Calu3 (cell line): ENCODE measurements at regions of chr17 and their contacts with region 1.

Region 1: GRCh38 chr17:72618001-72618509 is 474.4 kb downstream of the SLC39A11 start:
- DNase-seq: peak; percentile 94
- H3K4me3 Mint-ChIP-seq: peak overlapping the region; percentile 61
- H3K27ac Mint-ChIP-seq: peak overlapping the region; percentile 98
- H3K4me1 Mint-ChIP-seq: peaks cover 72% of the 10 kb centered on the region
- H3K27me3 Mint-ChIP-seq: no peaks in the 10 kb centered on the region
- CTCF ChIP-seq: no peak

Region 2: DNA sequence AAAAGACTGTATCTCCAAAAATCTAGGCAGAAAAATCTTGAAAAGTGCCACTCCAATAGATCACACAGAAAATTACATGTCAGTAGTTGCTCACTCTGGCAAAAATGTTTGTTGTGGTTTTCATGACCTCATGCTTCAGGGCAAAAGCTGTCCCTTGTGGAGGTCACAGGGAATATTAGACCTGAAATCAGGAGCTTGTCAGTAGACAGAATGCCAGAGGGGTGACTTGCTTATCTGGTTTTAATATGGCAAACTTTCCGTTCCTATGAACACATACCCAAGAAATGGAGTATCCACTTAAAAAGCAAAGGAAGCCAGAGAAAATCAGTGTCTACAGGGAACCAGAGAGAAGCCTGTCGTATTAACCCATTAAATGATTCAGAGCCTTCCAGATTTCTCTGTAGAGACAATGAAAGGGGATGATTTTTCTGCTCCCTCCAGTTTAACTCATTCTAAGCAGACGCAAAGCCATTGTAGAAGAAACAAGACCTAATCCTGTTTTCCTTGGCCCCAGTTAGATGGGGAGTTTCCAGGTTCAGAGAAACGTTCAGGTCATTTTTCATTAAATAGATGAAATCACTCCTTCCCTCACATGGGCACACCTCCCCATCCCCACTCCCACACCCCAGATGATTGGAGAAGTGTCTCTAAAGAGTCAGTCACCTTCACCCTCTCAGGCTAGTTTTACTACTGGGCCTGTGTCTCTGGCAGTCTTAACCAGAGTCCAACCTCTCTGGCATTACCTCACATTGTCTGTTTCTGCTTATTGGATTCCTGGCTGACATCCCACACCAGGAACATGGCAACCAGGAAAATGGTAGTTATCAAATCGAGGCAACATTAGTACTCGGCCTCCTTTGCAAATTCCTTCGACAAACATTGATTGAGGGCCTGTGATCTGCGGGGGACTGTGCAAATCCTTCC is 491.2 kb before region 1 on chr17:
- CTCF ChIA-PET with region 1: interaction called, 7 read pairs
- intact Hi-C with region 1: loop called (anchors 1 kb)
- DNase-seq: peak; percentile 61
- H3K4me3 Mint-ChIP-seq: peak overlapping the region; percentile 90
- H3K27ac Mint-ChIP-seq: peak overlapping the region; percentile 64
- H3K4me1 Mint-ChIP-seq: peaks cover 35% of the 10 kb centered on the region
- H3K27me3 Mint-ChIP-seq: peaks cover 28% of the 10 kb centered on the region
- CTCF ChIP-seq: no peak

Region 3: DNA sequence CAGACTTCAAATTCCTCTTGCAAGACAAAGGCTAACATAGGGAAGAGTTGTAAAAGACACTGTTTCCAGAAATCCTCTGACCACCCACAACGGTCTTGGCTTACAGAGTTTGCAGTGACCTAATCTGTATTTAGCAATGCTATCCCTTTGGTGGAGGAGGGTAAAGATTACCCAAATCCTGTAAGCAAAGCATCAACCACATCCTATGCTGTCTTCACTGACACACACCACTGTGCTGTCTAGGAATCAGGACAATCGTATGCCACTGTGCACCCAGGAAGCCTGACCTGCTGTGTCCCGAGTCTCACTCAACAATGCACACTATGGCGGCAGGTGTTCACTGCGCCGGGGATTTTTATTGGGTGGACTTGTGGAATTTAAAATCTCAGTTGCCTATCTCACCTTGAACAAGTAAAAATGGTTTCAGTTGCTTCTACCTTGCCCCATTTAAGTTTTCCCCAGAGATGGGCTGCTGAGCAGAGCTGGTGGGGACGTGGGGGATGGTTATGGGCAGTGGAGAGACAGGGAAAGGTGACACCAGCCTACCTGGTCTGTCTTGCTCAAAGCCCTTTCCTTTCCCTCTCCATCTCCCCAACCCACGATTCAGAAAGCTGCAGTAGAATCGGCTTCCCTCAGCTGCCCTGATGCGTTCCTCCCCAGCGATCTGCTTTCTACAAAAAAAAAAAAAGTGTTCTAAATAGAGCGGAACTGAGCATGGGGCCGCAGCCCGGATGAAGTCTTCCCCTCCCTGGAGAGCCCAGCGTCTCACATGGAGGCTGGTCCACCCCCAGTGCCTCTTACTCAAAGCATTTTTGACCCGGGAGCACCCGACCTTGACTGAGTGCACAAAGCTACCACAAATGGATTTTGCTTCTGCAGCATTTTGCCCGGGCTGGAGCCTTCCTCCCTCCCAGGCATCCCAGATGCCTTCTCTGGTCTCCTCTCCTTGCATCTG is 225.7 kb before region 1 on chr17:
- CTCF ChIA-PET with region 1: interaction called, 11 read pairs
- intact Hi-C with region 1: no loop called
- DNase-seq: no peak
- H3K4me3 Mint-ChIP-seq: no peak overlapping the region
- H3K27ac Mint-ChIP-seq: peak overlapping the region; percentile 82
- H3K4me1 Mint-ChIP-seq: peaks cover 73% of the 10 kb centered on the region
- H3K27me3 Mint-ChIP-seq: no peaks in the 10 kb centered on the region
- CTCF ChIP-seq: no peak

Region 4: DNA sequence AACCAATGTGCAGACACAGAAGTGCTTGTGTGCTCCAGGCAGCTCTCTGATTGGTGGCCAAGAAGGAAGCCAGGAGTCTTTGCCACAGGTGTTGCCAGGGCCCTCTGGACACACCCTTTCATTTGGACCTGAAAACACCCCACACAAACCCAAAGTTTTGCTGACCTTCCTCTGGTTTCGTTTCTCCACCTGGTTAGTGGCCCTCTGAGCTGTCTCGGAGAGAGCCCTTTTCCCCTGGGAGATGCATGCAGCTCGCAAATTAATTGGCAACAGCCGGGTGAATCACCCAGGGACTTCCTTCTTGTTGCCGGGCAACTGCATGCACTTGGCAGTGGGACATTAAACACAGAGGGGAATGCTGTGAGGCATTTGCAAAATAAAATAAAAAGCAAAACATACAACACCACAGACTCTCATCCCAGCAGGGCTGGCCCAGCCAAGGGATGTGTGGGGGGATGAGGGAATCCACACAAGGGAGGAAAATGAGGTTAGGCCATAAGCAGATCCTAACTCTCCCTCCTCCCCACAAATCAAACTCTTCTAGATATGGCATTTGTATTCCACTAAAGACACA is 210.6 kb before region 1 on chr17:
- CTCF ChIA-PET with region 1: interaction called, 4 read pairs
- intact Hi-C with region 1: loop called (anchors 5 kb)
- DNase-seq: peak; percentile 90
- H3K4me3 Mint-ChIP-seq: peak overlapping the region; percentile 65
- H3K27ac Mint-ChIP-seq: peak overlapping the region; percentile 99
- H3K4me1 Mint-ChIP-seq: peaks cover 92% of the 10 kb centered on the region
- H3K27me3 Mint-ChIP-seq: no peaks in the 10 kb centered on the region
- CTCF ChIP-seq: no peak

Region 5: DNA sequence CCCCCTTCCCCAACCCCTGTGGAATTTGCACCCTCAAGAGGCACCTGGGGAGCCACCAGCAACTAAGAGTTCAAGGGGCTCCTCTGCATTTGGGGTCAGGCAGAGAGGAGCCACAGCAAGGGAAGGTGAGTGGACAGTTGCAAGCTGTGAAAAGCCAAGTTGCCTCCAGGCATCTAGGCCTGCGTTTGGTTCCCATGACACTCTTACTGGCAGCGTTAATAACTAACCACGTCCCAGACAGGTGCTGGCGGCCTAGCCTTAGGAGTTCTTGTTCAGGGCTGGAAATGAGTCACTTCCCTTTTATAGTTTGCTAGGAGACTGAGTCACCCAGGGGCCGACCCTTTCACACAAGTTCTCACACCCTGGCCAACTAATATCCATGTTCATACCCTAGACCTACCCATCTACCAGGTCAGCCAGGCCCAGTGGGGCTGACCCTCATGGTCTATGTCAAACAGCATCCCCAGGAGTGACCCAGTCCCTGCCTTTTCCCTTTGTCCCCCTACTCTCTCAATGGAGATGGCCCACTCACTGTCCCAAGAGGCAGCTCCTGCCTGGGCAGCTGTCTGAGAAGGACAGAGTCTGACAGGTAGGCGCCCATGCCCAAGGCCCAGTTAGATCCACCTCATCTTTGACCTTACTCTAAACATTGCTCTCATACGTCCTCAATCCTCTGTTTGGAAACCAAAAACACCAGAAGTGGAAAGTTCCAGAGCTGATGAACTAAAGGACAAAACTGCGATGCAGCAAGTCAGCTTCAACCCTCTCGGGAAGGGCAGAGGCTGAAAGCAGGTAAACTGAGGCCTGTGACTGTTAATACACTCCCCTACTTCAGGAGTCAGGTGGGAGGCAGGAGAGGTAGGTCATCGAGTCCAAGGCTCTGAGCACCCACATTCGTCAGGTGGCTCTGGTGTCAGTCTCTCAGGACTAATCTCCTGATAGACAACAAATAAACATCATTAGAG is 196.6 kb before region 1 on chr17:
- CTCF ChIA-PET with region 1: interaction called, 10 read pairs
- intact Hi-C with region 1: loop called (anchors 2 kb)
- DNase-seq: peak; percentile 90
- H3K4me3 Mint-ChIP-seq: peak overlapping the region; percentile 51
- H3K27ac Mint-ChIP-seq: peak overlapping the region; percentile 96
- H3K4me1 Mint-ChIP-seq: peaks cover 61% of the 10 kb centered on the region
- H3K27me3 Mint-ChIP-seq: no peaks in the 10 kb centered on the region
- CTCF ChIP-seq: no peak

Region 6: DNA sequence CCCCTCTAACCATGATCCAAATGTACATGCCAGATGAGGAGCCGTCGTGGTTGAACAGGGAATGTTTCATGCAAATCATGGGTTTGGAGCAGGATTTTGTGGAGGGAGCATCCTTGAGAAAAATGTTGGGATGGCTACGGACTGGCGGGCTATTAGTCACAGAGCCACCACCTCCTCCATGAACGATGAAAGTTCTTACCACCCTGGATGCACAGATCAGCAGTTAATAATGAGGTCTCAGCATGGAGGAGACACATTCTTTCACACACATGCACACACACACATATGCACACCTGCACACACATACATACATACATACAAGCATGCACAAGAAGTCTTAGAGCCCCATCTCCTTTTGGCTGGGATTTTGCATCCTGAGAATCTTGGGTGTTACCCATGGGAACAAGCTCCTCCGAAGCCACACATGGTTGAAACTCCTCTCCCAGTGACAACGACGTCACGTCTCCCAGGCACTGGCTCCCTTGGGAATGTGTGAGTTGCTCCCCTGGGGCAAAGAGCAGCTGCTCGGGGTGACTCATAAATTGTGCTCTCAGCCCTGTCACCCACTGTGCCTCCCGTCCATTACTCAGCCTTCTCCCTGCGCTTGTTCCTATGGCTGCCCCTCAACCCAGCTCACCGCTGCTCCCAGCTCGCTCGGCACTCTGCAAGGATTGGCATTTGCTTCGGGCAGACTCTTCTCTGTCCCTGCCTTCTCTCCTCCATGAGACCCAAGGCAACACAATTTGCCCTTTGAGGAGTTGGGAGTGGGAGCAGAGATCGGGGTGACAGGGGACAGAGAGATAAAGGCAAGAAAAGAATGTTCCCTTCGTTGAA is 152.6 kb before region 1 on chr17:
- CTCF ChIA-PET with region 1: interaction called, 11 read pairs
- intact Hi-C with region 1: loop called (anchors 2 kb)
- DNase-seq: peak; percentile 86
- H3K4me3 Mint-ChIP-seq: peak overlapping the region; percentile 58
- H3K27ac Mint-ChIP-seq: no peak overlapping the region
- H3K4me1 Mint-ChIP-seq: peaks cover 61% of the 10 kb centered on the region
- H3K27me3 Mint-ChIP-seq: no peaks in the 10 kb centered on the region
- CTCF ChIP-seq: no peak

Region 7: DNA sequence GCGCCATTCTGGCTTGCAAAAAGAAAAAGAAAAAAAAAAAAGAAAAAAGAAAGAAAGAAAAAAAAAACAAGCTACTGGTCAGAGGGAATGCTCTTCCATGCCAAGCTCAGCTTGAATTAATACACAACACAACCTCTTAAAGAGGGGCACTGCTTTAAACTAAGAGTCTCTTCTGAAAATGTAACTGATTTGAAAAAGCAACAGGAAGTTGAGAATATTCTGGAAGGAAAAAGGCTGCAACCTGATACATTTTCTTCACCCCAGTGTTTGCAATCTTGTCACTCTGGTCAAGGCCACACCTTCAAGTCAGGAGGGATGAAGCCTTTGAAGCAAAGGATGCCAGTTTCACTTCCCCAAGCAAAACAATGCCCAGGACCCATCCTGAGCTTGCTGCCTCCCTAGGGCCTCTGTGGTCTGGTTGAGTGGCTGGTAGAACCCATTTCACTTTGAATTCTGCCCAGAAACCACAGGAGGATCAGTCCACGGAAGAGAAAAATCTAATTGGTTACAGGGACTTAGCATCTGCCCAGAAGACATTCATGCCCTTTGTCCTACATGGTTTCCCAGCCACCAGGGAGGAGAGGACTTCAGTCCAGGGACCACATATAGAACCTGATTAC is 107.5 kb before region 1 on chr17:
- CTCF ChIA-PET with region 1: no interaction called
- intact Hi-C with region 1: no loop called
- DNase-seq: no peak
- H3K4me3 Mint-ChIP-seq: no peak overlapping the region
- H3K27ac Mint-ChIP-seq: no peak overlapping the region
- H3K4me1 Mint-ChIP-seq: peaks cover 29% of the 10 kb centered on the region
- H3K27me3 Mint-ChIP-seq: no peaks in the 10 kb centered on the region
- CTCF ChIP-seq: no peak

Region 8: DNA sequence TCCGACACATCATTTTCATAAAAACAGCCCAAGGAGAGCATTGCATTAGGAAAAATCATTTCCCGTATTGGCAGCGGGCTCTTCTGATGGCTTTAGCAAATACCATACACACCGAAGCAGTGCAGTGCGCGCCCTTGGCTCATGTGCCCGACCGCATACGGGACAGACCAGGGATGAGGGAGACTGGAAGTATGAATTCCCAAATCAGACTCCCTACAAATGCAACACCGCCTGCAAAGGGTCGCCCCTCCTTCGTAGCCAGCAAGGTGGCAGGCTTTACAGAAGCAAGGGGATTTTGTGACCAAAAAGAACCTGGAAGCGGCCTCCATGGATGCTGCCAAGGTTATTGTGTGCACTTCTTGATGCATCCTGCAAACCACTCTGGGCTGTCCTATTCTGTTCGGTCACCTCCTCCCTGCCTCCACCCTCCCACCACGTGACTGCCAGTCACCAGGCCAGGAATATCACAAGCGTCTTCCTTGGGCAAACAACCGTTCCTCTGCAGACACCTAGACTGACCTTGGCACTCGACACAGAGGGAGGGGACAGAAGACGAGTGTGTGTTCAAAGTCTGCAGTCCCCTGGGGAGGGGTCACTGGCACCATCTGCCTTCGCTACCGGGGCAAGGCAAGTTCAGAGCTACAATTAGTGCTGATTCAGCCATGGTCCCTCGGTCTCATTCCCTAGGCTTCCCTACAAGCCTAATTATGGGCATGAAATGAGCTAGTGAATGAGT is 14.1 kb after region 1 on chr17:
- CTCF ChIA-PET with region 1: interaction called, 7 read pairs
- intact Hi-C with region 1: loop called (anchors 2 kb)
- DNase-seq: peak; percentile 57
- H3K4me3 Mint-ChIP-seq: no peak overlapping the region
- H3K27ac Mint-ChIP-seq: peak overlapping the region; percentile 72
- H3K4me1 Mint-ChIP-seq: peaks cover 51% of the 10 kb centered on the region
- H3K27me3 Mint-ChIP-seq: no peaks in the 10 kb centered on the region
- CTCF ChIP-seq: no peak